RWPE1 (cell line): ENCODE measurements at regions of chr1 and their contacts with region 1.

Region 1: GRCh38 chr1:26695356-26696118 is at the start of gene ARID1A:
- DNase-seq: peak; percentile 58
- H3K27ac ChIP-seq: peak within 1 kb of the TSS; percentile 96
- CTCF ChIP-seq: no peak

Region 2: GRCh38 chr1:26279456-26280332 is 415.8 kb before region 1 on chr1 and contains the start of gene SH3BGRL3:
- CTCF ChIA-PET with region 1: no interaction called
- POLR2A ChIA-PET with region 1: no interaction called
- DNase-seq: peak; percentile 85
- H3K27ac ChIP-seq: peak within 1 kb of the TSS; percentile 99
- CTCF ChIP-seq: peak; percentile 70

Region 3: GRCh38 chr1:26450908-26451307 is 244.6 kb before region 1 on chr1:
- CTCF ChIA-PET with region 1: no interaction called
- POLR2A ChIA-PET with region 1: interaction called, 11 read pairs
- DNase-seq: no peak
- H3K27ac ChIP-seq: no peak overlapping the region
- CTCF ChIP-seq: no peak

Region 4: GRCh38 chr1:26677306-26678115 is 18.0 kb before region 1 on chr1:
- CTCF ChIA-PET with region 1: interaction called, 21 read pairs
- POLR2A ChIA-PET with region 1: interaction called, 6 read pairs
- DNase-seq: peak; percentile 83
- H3K27ac ChIP-seq: no peak overlapping the region
- CTCF ChIP-seq: peak; percentile 90

Region 5: GRCh38 chr1:26882696-26883463 is 187.3 kb after region 1 on chr1:
- CTCF ChIA-PET with region 1: no interaction called
- POLR2A ChIA-PET with region 1: no interaction called
- DNase-seq: no peak
- H3K27ac ChIP-seq: no peak overlapping the region
- CTCF ChIP-seq: no peak